A673 (cell line): ENCODE measurements at regions of chr4 and their contacts with region 1.

Region 1: GRCh38 chr4:107736924-107737448 is 17.0 kb upstream of the PAPSS1 start:
- DNase-seq: peak; percentile 69
- H3K4me3 ChIP-seq: no peak overlapping the region
- H3K27ac ChIP-seq: no peak overlapping the region
- H3K4me1 ChIP-seq: peaks cover 37% of the 10 kb centered on the region
- H3K27me3 ChIP-seq: no peaks in the 10 kb centered on the region
- CTCF ChIP-seq: peak; percentile 88

Region 2: GRCh38 chr4:107419052-107419451 is 317.9 kb before region 1 on chr4:
- CTCF ChIA-PET with region 1: no interaction called
- POLR2A ChIA-PET with region 1: no interaction called
- intact Hi-C with region 1: no loop called
- DNase-seq: no peak
- H3K4me3 ChIP-seq: no peak overlapping the region
- H3K27ac ChIP-seq: no peak overlapping the region
- H3K4me1 ChIP-seq: no peaks in the 10 kb centered on the region
- H3K27me3 ChIP-seq: no peaks in the 10 kb centered on the region
- CTCF ChIP-seq: no peak

Region 3: GRCh38 chr4:107449611-107450369 is 287.2 kb before region 1 on chr4:
- CTCF ChIA-PET with region 1: no interaction called
- POLR2A ChIA-PET with region 1: no interaction called
- intact Hi-C with region 1: no loop called
- DNase-seq: peak; percentile 18
- H3K4me3 ChIP-seq: no peak overlapping the region
- H3K27ac ChIP-seq: no peak overlapping the region
- H3K4me1 ChIP-seq: no peaks in the 10 kb centered on the region
- H3K27me3 ChIP-seq: no peaks in the 10 kb centered on the region
- CTCF ChIP-seq: no peak

Region 4: DNA sequence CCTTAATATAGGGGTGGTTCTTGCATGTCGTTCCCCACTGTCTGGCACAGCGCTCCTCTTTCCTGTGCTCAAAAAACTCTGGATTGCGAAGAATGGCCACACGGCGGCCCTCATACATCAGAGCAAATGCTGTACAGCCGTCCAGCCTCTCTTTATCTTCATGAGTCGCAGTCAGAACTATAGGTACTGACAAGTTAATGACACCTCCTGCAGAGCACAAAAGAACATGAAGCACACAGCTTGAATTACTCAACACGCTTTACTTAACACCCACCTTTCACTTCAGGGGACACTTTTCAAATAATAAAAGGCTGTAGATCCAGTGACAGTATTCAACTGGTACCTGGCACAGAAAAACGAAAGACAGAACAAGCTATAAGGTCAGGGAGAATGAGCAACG is 82.3 kb before region 1 on chr4:
- CTCF ChIA-PET with region 1: interaction called, 3 read pairs
- POLR2A ChIA-PET with region 1: no interaction called
- intact Hi-C with region 1: loop called (anchors 1 kb)
- DNase-seq: peak; percentile 68
- H3K4me3 ChIP-seq: no peak overlapping the region
- H3K27ac ChIP-seq: no peak overlapping the region
- H3K4me1 ChIP-seq: peaks cover 16% of the 10 kb centered on the region
- H3K27me3 ChIP-seq: no peaks in the 10 kb centered on the region
- CTCF ChIP-seq: peak; percentile 56

Region 5: GRCh38 chr4:108247387-108248049 is 510.5 kb after region 1 on chr4:
- CTCF ChIA-PET with region 1: no interaction called
- POLR2A ChIA-PET with region 1: no interaction called
- intact Hi-C with region 1: no loop called
- DNase-seq: peak; percentile 4
- H3K4me3 ChIP-seq: no peak overlapping the region
- H3K27ac ChIP-seq: no peak overlapping the region
- H3K4me1 ChIP-seq: no peaks in the 10 kb centered on the region
- H3K27me3 ChIP-seq: no peaks in the 10 kb centered on the region
- CTCF ChIP-seq: no peak